ENCODE measurements at regions of chr7 and their contacts with region 1.

Region 1: GRCh38 chr7:129091484-129092002 is 36.6 kb upstream of the TNPO3 start:
- DNase-seq: peak; percentile 82
- CTCF ChIP-seq: peak; percentile 95

Region 2: GRCh38 chr7:128904381-128905197 is 187.0 kb before region 1 on chr7:
- CTCF ChIA-PET with region 1: interaction called, 20 read pairs
- POLR2A ChIA-PET with region 1: no interaction called
- DNase-seq: peak; percentile 86
- CTCF ChIP-seq: peak; percentile 62

Region 3: GRCh38 chr7:129054438-129055293 is 36.9 kb before region 1 on chr7 and contains the start of gene TNPO3:
- CTCF ChIA-PET with region 1: interaction called, 223 read pairs
- POLR2A ChIA-PET with region 1: interaction called, 5 read pairs
- DNase-seq: peak; percentile 93
- CTCF ChIP-seq: no peak

Region 4: GRCh38 chr7:129115676-129116075 is 24.1 kb after region 1 on chr7:
- CTCF ChIA-PET with region 1: interaction called, 26 read pairs
- POLR2A ChIA-PET with region 1: no interaction called
- DNase-seq: no peak
- CTCF ChIP-seq: no peak

Region 5: DNA sequence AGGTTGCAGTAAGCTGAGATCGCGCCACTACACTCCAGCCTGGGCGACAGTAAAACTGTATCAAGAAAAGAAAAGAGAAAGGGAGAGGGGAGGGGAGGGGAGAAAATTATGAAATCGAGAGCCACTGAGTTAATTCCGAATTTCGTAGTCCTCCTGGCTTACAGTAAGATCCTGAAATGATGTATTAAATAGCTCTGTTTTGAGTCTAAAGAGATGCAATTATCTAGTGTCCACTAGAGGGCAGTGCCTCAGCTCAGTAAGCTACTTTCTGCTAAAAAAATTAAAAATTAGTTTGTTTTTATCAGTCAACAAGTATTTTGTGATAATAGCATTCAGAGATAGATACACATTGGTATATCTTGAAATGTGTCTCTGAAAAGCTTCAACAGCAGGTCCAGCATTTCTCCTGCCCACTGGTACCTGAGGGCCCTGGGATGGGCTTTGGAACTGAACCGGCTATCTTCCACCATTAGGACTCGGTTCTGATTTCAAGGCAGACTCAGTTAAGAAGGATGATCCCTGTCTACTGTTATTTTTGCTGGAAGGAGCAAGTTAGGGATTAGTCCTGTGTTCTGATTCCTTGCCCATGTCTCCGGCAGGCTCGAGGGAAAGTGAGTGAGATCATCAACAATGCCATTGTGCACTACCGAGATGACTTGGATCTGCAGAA is 72.5 kb after region 1 on chr7:
- CTCF ChIA-PET with region 1: interaction called, 14 read pairs
- POLR2A ChIA-PET with region 1: interaction called, 3 read pairs
- DNase-seq: no peak
- CTCF ChIP-seq: peak; percentile 68